ENCODE measurements at regions of chr10 and their contacts with region 1.

Region 1: GRCh38 chr10:32171204-32171603 is 115.0 kb upstream of the KIF5B start:
- DNase-seq: peak; percentile 87 to 89
- H3K4me3 ChIP-seq: no peak overlapping the region
- H3K4me3 Mint-ChIP-seq: peak overlapping the region; percentile 63
- H3K27ac Mint-ChIP-seq: peak overlapping the region; percentile 96
- H3K4me1 ChIP-seq: peaks cover 29% of the 10 kb centered on the region
- H3K4me1 Mint-ChIP-seq: peaks cover 23% of the 10 kb centered on the region
- H3K27me3 ChIP-seq: no peaks in the 10 kb centered on the region
- H3K27me3 Mint-ChIP-seq: no peaks in the 10 kb centered on the region
- CTCF ChIP-seq: no peak

Region 2: GRCh38 chr10:31912898-31913852 is 258.0 kb before region 1 on chr10:
- CTCF ChIA-PET with region 1: no interaction called
- POLR2A ChIA-PET with region 1: no interaction called
- intact Hi-C with region 1: no loop called
- DNase-seq: no peak
- H3K4me3 ChIP-seq: no peak overlapping the region
- H3K4me3 Mint-ChIP-seq: no peak overlapping the region
- H3K27ac Mint-ChIP-seq: peak overlapping the region; percentile 24
- H3K4me1 ChIP-seq: peaks cover 34% of the 10 kb centered on the region
- H3K4me1 Mint-ChIP-seq: peaks cover 29% of the 10 kb centered on the region
- H3K27me3 ChIP-seq: no peaks in the 10 kb centered on the region
- H3K27me3 Mint-ChIP-seq: no peaks in the 10 kb centered on the region
- CTCF ChIP-seq: no peak

Region 3: GRCh38 chr10:32055813-32056600 is 115.2 kb before region 1 on chr10 and contains the start of gene KIF5B:
- CTCF ChIA-PET with region 1: interaction called, 3 read pairs
- POLR2A ChIA-PET with region 1: no interaction called
- intact Hi-C with region 1: loop called (anchors 1 kb)
- DNase-seq: peak; percentile 91 to 97
- H3K4me3 ChIP-seq: peak within 1 kb of the TSS; percentile 97
- H3K4me3 Mint-ChIP-seq: peak within 1 kb of the TSS; percentile 98
- H3K27ac Mint-ChIP-seq: peak within 1 kb of the TSS; percentile 90
- H3K4me1 ChIP-seq: peaks cover 58% of the 10 kb centered on the region
- H3K4me1 Mint-ChIP-seq: peaks cover 33% of the 10 kb centered on the region
- H3K27me3 ChIP-seq: no peaks in the 10 kb centered on the region
- H3K27me3 Mint-ChIP-seq: no peaks in the 10 kb centered on the region
- CTCF ChIP-seq: no peak
- total RNA-seq, gene KIF5B: 172 and 183 TPM in 2 replicates

Region 4: GRCh38 chr10:32104622-32105509 is 66.3 kb before region 1 on chr10:
- CTCF ChIA-PET with region 1: no interaction called
- POLR2A ChIA-PET with region 1: interaction called, 3 read pairs
- intact Hi-C with region 1: loop called (anchors 1 kb)
- DNase-seq: no peak
- H3K4me3 ChIP-seq: no peak overlapping the region
- H3K4me3 Mint-ChIP-seq: no peak overlapping the region
- H3K27ac Mint-ChIP-seq: no peak overlapping the region
- H3K4me1 ChIP-seq: peaks cover 27% of the 10 kb centered on the region
- H3K4me1 Mint-ChIP-seq: peaks cover 18% of the 10 kb centered on the region
- H3K27me3 ChIP-seq: no peaks in the 10 kb centered on the region
- H3K27me3 Mint-ChIP-seq: no peaks in the 10 kb centered on the region
- CTCF ChIP-seq: no peak

Region 5: GRCh38 chr10:32156010-32156495 is 15.2 kb before region 1 on chr10:
- CTCF ChIA-PET with region 1: interaction called, 3 read pairs
- POLR2A ChIA-PET with region 1: interaction called, 7 read pairs
- intact Hi-C with region 1: loop called (anchors 1 kb)
- DNase-seq: peak; percentile 76 to 79
- H3K4me3 ChIP-seq: no peak overlapping the region
- H3K4me3 Mint-ChIP-seq: peak overlapping the region; percentile 48
- H3K27ac Mint-ChIP-seq: peak overlapping the region; percentile 76
- H3K4me1 ChIP-seq: peaks cover 22% of the 10 kb centered on the region
- H3K4me1 Mint-ChIP-seq: peaks cover 29% of the 10 kb centered on the region
- H3K27me3 ChIP-seq: no peaks in the 10 kb centered on the region
- H3K27me3 Mint-ChIP-seq: no peaks in the 10 kb centered on the region
- CTCF ChIP-seq: no peak

Region 6: GRCh38 chr10:32237644-32238345 is 66.6 kb after region 1 on chr10:
- CTCF ChIA-PET with region 1: no interaction called
- POLR2A ChIA-PET with region 1: no interaction called
- intact Hi-C with region 1: no loop called
- DNase-seq: no peak
- H3K4me3 ChIP-seq: no peak overlapping the region
- H3K4me3 Mint-ChIP-seq: no peak overlapping the region
- H3K27ac Mint-ChIP-seq: no peak overlapping the region
- H3K4me1 ChIP-seq: no peaks in the 10 kb centered on the region; the same call in 1 of the 2 replicates
- H3K4me1 Mint-ChIP-seq: no peaks in the 10 kb centered on the region
- H3K27me3 ChIP-seq: no peaks in the 10 kb centered on the region
- H3K27me3 Mint-ChIP-seq: no peaks in the 10 kb centered on the region
- CTCF ChIP-seq: no peak

Measured in Caco-2 (cell line).